ENCODE measurements at regions of chr20 and their contacts with region 1.

Region 1: DNA sequence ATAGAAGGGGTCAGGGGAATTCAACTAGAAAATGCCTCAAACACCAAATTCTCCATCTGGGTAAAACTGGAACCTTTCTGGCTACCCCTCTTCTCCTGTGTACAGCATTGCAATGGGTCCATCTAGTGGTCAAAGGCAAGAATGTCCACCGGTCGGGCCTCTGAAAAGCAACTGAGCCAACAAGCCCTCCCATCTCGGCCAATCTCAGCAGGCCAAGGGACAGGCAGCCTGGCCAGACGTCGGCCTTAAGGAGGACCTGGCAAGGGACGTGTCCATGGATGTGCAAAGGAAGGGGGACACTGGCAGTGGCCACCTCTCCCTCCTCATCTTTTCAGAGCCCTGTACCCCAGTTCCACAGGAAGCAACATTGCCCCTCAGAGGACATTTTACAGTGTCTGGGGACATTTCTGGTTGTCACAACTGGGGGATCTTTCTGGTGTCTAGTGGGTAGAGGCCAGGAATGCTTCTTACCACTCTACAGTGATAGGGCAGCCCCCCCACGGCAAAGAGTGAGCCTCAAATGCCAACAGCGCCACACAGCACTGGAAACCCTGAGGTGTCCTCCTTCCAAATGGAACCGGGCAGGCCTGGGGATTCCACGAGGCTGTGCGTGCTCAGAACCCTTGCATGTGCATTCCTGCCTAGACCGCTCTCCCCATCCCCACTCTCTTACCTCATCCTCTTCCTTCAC is 99.8 kb upstream of the FOXA2 start:
- DNase-seq: peak; percentile 44 to 60 (median 57)
- H3K4me3 ChIP-seq: no peak overlapping the region
- H3K4me3 Mint-ChIP-seq: no peak overlapping the region
- H3K27ac ChIP-seq: no peak overlapping the region
- H3K27ac Mint-ChIP-seq: no peak overlapping the region
- H3K4me1 ChIP-seq: peaks cover 32 to 34% of the 10 kb centered on the region in 2 donors
- H3K4me1 Mint-ChIP-seq: peaks cover 40% of the 10 kb centered on the region
- H3K27me3 ChIP-seq: no peaks in the 10 kb centered on the region
- H3K27me3 Mint-ChIP-seq: peaks cover 0 to 5% (median 2%) of the 10 kb centered on the region in 3 donors
- CTCF ChIP-seq: peak; percentile 82

Region 2: DNA sequence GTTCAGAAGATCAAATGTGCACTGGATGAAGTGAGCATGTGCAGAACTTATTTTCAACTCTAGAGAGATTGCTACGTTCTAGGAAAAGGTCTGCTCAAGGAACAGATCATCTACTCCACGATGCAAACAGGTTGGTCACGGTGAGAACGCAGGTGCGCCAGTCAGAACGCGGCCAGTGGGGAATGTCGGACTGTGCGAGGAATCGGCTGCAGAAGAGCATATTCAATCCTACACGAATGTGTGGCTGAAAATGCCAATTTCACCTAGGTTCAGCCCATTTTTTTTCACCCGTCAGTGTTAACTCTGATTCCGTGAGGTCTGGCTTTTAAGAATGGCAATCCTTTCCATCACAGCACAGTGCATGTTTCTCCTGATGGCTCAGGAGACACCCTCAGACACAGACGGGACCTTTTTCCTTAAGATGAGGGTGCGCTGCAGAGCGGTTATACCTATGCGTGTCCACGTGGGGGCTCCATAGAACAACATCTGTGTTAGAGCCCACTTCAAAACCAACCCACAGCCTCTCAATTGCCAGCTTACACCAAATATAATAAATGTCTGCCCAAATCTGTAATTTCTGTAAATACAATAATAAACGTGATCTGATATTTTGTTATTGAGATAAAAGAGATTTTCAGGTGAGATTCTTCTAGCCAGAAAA is 350.2 kb before region 1 on chr20:
- intact Hi-C with region 1: loop called (anchors 2 to 5 kb)
- DNase-seq: peak; percentile 7 to 45 (median 30)
- H3K4me3 ChIP-seq: no peak overlapping the region
- H3K4me3 Mint-ChIP-seq: no peak overlapping the region
- H3K27ac ChIP-seq: no peak overlapping the region
- H3K27ac Mint-ChIP-seq: no peak overlapping the region
- H3K4me1 ChIP-seq: no peaks in the 10 kb centered on the region
- H3K4me1 Mint-ChIP-seq: no peaks in the 10 kb centered on the region
- H3K27me3 ChIP-seq: peaks cover 0 to 4% of the 10 kb centered on the region in 2 donors
- H3K27me3 Mint-ChIP-seq: peaks cover 9 to 21% (median 19%) of the 10 kb centered on the region in 3 donors
- CTCF ChIP-seq: peak; percentile 80

Region 3: DNA sequence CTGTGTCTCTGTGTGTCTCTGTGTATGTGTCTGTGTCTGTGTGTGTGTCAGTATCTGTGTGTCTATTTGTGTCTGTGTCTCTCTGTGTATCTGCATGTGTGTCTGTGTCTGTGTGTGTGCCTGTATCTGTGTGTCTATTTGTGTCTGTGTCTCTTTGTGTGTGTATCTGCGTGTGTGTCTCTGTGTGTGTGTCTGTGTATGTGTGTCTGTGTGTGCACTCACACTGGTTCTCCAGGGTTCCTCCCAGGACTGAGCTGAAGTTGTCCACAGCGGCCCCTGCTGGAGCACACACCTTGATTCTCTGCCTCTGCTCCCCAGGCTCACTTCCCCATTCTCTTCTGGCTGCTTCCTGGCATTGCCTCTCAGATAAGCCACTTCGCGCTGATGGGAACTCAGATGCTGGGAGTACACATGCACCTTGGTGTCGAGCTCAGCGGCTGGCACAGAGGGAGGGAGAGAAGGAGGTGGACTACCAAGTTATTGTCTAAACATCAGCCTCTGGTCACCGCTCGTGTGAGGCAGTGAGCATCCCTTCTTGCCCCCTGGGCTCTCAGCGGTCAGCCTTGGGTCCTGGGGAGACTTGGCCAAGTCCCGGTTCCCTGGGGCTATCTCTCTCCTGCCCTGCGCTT is 561.5 kb after region 1 on chr20:
- intact Hi-C with region 1: loop called in 1 of 2 experiments (anchors 10 kb)
- DNase-seq: peak; percentile 84 to 88 (median 86)
- H3K4me3 ChIP-seq: no peak overlapping the region
- H3K4me3 Mint-ChIP-seq: no peak overlapping the region
- H3K27ac ChIP-seq: no peak overlapping the region
- H3K27ac Mint-ChIP-seq: peak overlapping the region in 6 of 7 donors; percentile 0 to 74 (median 14)
- H3K4me1 ChIP-seq: peaks cover 0 to 9% of the 10 kb centered on the region in 2 donors
- H3K4me1 Mint-ChIP-seq: peaks cover 16% of the 10 kb centered on the region
- H3K27me3 ChIP-seq: no peaks in the 10 kb centered on the region
- H3K27me3 Mint-ChIP-seq: peaks cover 0 to 12% (median 2%) of the 10 kb centered on the region in 3 donors
- CTCF ChIP-seq: peak; percentile 72